GM12878 (cell line): ENCODE measurements at regions of chr22 and their contacts with region 1.

Region 1: DNA sequence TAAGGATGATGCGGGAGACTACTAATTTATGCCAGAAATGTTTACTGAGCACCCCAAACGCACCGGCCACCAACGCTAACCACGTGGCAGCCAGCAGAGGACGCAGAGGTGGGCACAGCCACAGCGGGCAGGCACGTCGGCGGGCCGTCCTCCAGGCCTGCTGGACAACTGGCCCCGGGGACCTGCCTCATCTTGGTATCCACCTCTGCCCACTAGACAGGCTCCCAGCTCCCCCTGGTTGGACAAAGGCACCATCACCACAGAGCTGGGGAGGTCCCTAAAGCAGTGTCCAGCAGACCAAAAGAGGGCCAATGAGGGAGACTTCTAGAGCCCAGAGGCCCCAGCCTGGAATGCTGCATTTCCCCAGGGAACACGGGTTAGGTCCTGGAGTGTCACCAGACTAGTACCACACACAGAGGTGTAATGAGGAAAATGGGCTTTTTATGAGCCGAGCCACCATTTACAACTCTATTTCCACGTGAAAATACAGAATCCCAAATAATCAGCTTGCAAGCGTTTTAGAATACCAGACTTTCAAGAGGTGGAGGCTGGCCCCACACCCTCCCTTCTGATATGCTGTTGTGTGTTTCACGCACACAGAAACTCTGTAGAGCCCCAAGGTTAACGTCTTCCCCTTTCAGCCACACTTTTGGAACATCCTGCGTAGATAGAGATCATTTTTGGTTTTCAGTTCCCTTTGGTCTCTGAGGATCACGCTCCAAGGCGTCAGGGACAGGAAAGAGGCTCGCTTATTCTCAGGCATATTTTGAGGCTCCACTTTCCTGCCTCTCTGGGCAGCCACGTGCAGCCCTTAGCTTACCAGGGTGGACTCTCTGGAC is 23.7 kb upstream of the BID start:
- DNase-seq: peak; percentile 95
- ATAC-seq: peak; percentile 64
- H3K4me3 ChIP-seq: peak overlapping the region; percentile 63
- H3K27ac ChIP-seq: peak overlapping the region; percentile 100
- H3K4me1 ChIP-seq: peaks cover 86% of the 10 kb centered on the region
- H3K27me3 ChIP-seq: no peaks in the 10 kb centered on the region
- CTCF ChIP-seq: no peak
- EP300 ChIP-seq: peak; percentile 99 to 100
- POLR2A ChIP-seq: peak; percentile 41
- RAD21 ChIP-seq: no peak; the same call in 1 of the 2 replicates

Region 2: GRCh38 chr22:17773606-17774205 is 24.2 kb before region 1 on chr22:
- CTCF ChIA-PET with region 1: interaction called, 70 read pairs
- POLR2A ChIA-PET with region 1: interaction called, 85 read pairs
- RAD21 ChIA-PET with region 1: interaction called, 77 read pairs
- SMC1A ChIA-PET with region 1: interaction called, 10 read pairs
- in situ Hi-C with region 1: no loop called
- intact Hi-C with region 1: loop called (anchors 1 kb)
- DNase-seq: no peak
- ATAC-seq: peak; percentile 49
- H3K4me3 ChIP-seq: peak overlapping the region; percentile 83
- H3K27ac ChIP-seq: peak overlapping the region; percentile 69
- H3K4me1 ChIP-seq: peaks cover 46% of the 10 kb centered on the region
- H3K27me3 ChIP-seq: no peaks in the 10 kb centered on the region
- CTCF ChIP-seq: no peak
- EP300 ChIP-seq: no peak
- POLR2A ChIP-seq: no peak; the same call in none of the 2 replicates
- RAD21 ChIP-seq: no peak

Region 3: DNA sequence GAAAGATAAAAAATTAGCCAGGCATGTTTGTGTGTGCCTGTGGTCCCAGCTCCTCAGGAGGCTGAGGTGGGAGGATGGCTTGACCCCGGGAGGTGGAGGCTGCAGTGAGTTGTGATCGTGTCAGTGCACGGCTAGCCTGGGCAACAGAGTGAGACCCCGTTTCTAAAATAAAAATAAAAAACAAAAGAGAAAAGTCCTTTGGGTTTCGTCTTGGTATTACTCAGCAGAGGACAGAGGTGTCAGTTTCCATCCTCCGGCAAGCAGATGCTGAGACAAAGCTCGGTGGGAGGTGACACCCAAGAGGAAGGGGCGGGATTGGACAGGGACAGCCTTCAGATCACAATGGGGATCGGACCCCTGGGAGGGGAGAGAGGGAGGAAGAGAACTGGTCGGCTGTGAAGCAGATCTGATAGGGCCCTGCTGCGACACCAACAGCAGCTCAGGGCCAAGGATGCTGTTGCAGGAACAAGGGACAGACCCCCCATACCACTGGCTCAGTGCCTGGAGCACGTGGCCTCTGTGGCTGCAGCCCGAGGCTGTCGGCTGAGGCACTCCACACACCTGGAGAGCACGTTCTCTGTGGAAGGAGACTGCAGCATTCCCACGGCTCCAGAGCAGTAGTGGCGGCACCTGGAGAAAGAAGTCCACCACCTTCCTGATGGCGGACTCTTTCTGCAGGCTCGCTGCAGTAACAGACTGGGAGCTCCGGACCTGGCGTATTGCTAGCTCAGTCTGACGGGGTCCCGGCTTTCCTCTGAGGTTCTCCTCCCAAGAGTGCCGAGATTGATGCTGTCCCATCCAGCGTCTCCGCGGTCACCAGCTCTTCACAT is 18.4 kb before region 1 on chr22:
- CTCF ChIA-PET with region 1: interaction called, 70 read pairs
- POLR2A ChIA-PET with region 1: interaction called, 85 read pairs
- RAD21 ChIA-PET with region 1: interaction called, 77 read pairs
- SMC1A ChIA-PET with region 1: interaction called, 14 read pairs
- in situ Hi-C with region 1: no loop called
- intact Hi-C with region 1: loop called (anchors 1 kb)
- DNase-seq: peak; percentile 83
- ATAC-seq: peak; percentile 59
- H3K4me3 ChIP-seq: peak overlapping the region; percentile 91
- H3K27ac ChIP-seq: peak overlapping the region; percentile 98
- H3K4me1 ChIP-seq: peaks cover 47% of the 10 kb centered on the region
- H3K27me3 ChIP-seq: no peaks in the 10 kb centered on the region
- CTCF ChIP-seq: no peak
- EP300 ChIP-seq: peak; percentile 32 to 54; a peak in 1 of 4 replicates
- POLR2A ChIP-seq: peak; percentile 79
- RAD21 ChIP-seq: no peak

Region 4: GRCh38 chr22:18110194-18110953 is 312.4 kb after region 1 on chr22 and contains the start of gene TUBA8:
- CTCF ChIA-PET with region 1: no interaction called
- POLR2A ChIA-PET with region 1: no interaction called
- RAD21 ChIA-PET with region 1: interaction called, 3 read pairs
- SMC1A ChIA-PET with region 1: interaction called, 3 read pairs
- in situ Hi-C with region 1: no loop called
- intact Hi-C with region 1: loop called (anchors 2 kb)
- DNase-seq: no peak
- ATAC-seq: peak; percentile 64
- H3K4me3 ChIP-seq: peak within 1 kb of the TSS; percentile 65
- H3K27ac ChIP-seq: peak within 1 kb of the TSS; percentile 67
- H3K4me1 ChIP-seq: peaks cover 41% of the 10 kb centered on the region
- H3K27me3 ChIP-seq: no peaks in the 10 kb centered on the region; a peak in 1 of 4 replicates
- CTCF ChIP-seq: peak in 1 of 3 experiments; percentile 16; a peak in 1 of 6 replicates
- EP300 ChIP-seq: no peak
- POLR2A ChIP-seq: peak; percentile 73
- RAD21 ChIP-seq: 0 out of 2 replicates have a peak, but pooled peaks have one; percentile 8
- polyA plus RNA-seq, gene TUBA8: 2.2 to 5.5 TPM